Head of caudate nucleus (tissue), 42 donors: ENCODE measurements at regions of chr11 and their contacts with region 1.

Region 1: DNA sequence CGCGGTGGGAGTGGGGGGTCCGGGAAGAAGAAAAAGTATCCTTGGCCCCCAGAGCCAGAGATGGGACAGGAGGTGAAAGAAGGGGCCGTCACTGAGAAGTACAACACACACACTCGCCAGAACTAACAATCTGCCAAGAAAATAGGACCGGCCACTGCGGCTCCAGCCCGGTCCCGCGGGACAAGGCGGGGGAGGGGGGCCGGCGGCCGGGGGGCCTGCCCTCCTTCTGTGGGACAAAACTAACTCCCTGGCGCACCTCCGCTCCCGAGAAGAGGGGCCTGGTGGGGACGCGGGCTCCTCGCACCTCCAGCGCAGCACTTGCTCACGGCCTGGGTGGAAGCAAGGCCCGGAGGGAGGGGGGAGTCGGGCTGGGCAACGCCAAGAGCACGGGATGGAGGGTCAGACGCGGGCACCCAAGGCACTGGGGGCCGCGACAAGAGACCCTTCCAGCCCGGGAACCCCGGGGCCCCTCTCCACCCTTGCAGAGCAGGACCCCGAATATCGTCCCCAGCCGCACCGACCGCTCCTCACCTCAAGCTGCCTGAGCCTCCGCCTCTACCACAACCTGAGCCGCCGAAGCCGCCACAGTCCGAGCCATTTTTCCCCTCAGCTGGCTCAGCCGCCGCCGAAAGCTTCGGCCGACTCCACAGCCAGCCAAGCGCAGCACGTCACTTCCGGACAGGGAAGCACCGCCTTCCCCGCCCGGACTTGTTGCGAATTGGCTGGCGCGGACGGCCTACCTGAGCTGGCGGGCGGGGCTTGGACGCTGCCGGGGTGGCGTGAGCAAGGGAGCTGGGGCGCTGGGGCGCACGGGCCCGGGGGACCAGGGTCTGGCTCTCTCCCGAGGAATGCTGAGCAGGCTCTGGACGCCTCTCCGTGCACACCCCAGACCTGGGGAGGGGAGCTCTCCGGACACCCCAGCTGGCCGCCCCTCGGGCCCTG is at the start of gene PIK3C2A:
- DNase-seq: peak; percentile 93 to 99 (median 97)

Region 2: GRCh38 chr11:17077520-17078401 is 129.8 kb before region 1 on chr11 and contains the start of gene RPS13:
- intact Hi-C with region 1: loop called (anchors 5 kb)
- DNase-seq: peak; percentile 96 to 99 (median 98)

Region 3: GRCh38 chr11:17230867-17231851 is 23.6 kb after region 1 on chr11:
- intact Hi-C with region 1: loop called (anchors 2 kb)
- DNase-seq: peak in 3 of 42 donors; percentile 15 to 21 (median 20)